ENCODE measurements at regions of chr20 and their contacts with region 1.

Region 1: DNA sequence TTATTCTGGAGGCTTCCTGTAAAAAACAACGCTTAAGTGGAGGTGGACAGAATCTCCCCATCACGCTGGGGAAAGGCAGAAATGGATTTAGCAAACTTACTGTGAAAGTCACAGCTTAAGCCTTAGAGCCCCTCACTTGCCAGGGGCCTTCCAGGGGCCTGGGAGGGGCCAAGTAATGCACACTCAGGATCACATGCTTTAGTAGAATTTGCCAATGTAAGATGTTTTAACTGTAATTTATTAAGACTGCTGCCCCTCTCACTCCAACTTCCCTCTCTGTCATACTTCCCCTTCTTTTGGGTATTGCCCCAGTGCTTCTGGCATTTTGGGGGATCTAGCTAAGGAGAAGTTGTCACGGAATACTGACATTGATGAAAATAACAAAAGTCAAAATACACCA is 12.6 kb upstream of the ADA start:
- DNase-seq: no peak
- H3K4me3 ChIP-seq: no peak overlapping the region
- H3K27ac ChIP-seq: no peak overlapping the region
- H3K4me1 ChIP-seq: no peaks in the 10 kb centered on the region
- H3K27me3 ChIP-seq: no peaks in the 10 kb centered on the region
- CTCF ChIP-seq: no peak

Region 2: DNA sequence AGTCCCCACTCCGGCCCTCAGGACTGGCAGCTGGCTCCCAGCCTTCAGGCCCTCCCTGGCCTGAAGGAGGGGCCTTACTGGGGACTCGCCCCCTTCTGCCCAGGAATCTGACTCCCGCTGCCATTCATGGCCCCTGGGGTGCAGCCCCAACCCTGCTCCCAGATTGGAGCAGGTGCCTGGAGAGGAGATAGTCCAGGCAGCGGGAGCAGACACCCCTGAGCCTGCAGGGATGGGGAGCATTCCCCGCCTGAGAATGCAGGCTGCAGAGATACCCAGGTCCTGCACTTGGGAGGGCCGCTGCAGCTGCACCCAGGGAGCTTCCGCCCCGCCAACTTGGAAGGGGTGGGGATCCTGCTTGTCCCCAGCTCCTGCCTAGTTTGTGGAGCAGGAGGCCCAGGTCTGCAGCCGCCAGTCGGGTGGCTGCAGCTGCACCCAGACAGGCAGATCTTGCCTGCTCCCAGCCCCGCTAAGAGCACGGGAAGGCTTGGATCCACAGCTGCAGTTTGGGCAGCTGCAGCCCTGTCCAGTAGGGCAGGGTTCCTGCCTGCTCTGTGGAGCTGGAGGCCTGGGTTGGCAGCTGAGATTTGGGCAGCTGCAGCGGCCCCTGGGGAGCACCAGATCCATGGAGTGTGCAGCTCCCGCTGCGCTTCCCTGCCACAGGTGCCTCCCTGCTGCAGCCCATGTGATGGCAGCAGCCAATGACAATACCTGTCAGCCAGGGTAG is 942.5 kb before region 1 on chr20:
- CTCF ChIA-PET with region 1: no interaction called
- POLR2A ChIA-PET with region 1: interaction called, 11 read pairs
- intact Hi-C with region 1: no loop called
- DNase-seq: no peak
- H3K4me3 ChIP-seq: no peak overlapping the region
- H3K27ac ChIP-seq: no peak overlapping the region
- H3K4me1 ChIP-seq: no peaks in the 10 kb centered on the region
- H3K27me3 ChIP-seq: no peaks in the 10 kb centered on the region
- CTCF ChIP-seq: no peak

Measured in PC-9 (cell line).